ENCODE measurements at regions of chr9 and their contacts with region 1.

Region 1: GRCh38 chr9:71628247-71628646 is 140.1 kb downstream of the CEMIP2 start:
- DNase-seq: no peak
- H3K4me3 ChIP-seq: no peak overlapping the region
- H3K27ac ChIP-seq: no peak overlapping the region
- H3K4me1 ChIP-seq: no peaks in the 10 kb centered on the region; a peak in 1 of 7 replicates
- H3K27me3 ChIP-seq: no peaks in the 10 kb centered on the region; a peak in 1 of 7 replicates
- CTCF ChIP-seq: peak in 2 of 3 experiments; percentile 49 to 60; a peak in 3 of 4 replicates
- EP300 ChIP-seq: no peak
- POLR2A ChIP-seq: no peak
- RAD21 ChIP-seq: peak; percentile 65 to 72

Region 2: GRCh38 chr9:71549023-71549422 is 79.2 kb before region 1 on chr9:
- CTCF ChIA-PET with region 1: no interaction called
- POLR2A ChIA-PET with region 1: no interaction called
- DNase-seq: no peak
- H3K4me3 ChIP-seq: no peak overlapping the region
- H3K27ac ChIP-seq: no peak overlapping the region
- H3K4me1 ChIP-seq: peaks cover 0 to 6% (median 3%) of the 10 kb centered on the region in 4 experiments; a peak in 6 of 7 replicates
- H3K27me3 ChIP-seq: no peaks in the 10 kb centered on the region
- CTCF ChIP-seq: no peak
- EP300 ChIP-seq: no peak
- POLR2A ChIP-seq: no peak
- RAD21 ChIP-seq: no peak

Region 3: DNA sequence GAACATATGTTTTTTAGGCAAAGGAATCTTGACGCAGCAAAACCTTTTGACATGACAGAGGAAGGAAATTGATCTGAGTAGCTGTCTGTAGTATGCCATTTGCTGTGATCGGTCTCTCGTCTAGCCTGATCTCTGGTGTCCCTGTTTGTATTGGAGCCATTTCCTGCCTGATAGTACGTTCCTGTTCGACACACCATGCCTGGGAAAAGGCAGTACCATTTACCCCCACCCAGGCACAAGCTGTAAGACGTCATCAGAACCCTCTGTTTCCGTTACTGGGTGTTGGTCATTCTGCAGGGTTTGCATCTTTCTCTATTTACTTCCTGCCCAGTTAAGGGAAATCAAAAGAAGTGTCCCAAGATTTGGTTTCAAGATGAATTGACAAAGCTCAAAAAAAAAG is 10.4 kb after region 1 on chr9:
- CTCF ChIA-PET with region 1: interaction called, 22 read pairs
- POLR2A ChIA-PET with region 1: no interaction called
- DNase-seq: no peak
- H3K4me3 ChIP-seq: no peak overlapping the region
- H3K27ac ChIP-seq: no peak overlapping the region
- H3K4me1 ChIP-seq: no peaks in the 10 kb centered on the region
- H3K27me3 ChIP-seq: no peaks in the 10 kb centered on the region; a peak in 1 of 7 replicates
- CTCF ChIP-seq: no peak
- EP300 ChIP-seq: no peak
- POLR2A ChIP-seq: no peak
- RAD21 ChIP-seq: no peak

Region 4: DNA sequence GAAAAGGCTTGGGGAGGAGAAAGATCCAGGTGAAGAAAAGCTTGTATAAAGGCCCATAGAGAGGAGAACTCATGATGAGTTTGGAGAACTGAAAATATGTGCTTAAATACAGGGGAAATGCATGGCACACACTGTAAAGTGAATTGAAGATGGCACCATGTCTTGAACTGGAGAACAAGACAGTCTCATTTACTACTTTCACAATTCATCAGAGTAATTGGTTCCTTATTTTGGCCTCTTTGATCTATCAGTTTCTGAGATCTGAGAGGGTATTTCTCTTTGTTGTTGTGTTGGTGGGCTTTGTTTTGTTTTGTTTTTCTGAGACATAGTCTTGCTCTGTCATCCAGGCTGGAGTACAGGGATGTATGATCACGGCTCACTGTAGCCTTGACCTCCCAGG is 41.9 kb after region 1 on chr9:
- CTCF ChIA-PET with region 1: no interaction called
- POLR2A ChIA-PET with region 1: no interaction called
- DNase-seq: no peak
- H3K4me3 ChIP-seq: no peak overlapping the region
- H3K27ac ChIP-seq: no peak overlapping the region
- H3K4me1 ChIP-seq: peaks cover 0 to 2% (median 0%) of the 10 kb centered on the region in 4 experiments; a peak in 2 of 7 replicates
- H3K27me3 ChIP-seq: no peaks in the 10 kb centered on the region
- CTCF ChIP-seq: no peak
- EP300 ChIP-seq: no peak
- POLR2A ChIP-seq: no peak
- RAD21 ChIP-seq: no peak

Region 5: GRCh38 chr9:71683598-71684235 is 55.5 kb after region 1 on chr9:
- CTCF ChIA-PET with region 1: interaction called, 19 read pairs
- POLR2A ChIA-PET with region 1: no interaction called
- DNase-seq: peak; percentile 51 to 55
- H3K4me3 ChIP-seq: 0 out of 8 replicates have a peak overlapping the region, but pooled peaks of 1 of the 4 experiments have one; percentile 0
- H3K27ac ChIP-seq: no peak overlapping the region; the same call in 1 of the 2 replicates
- H3K4me1 ChIP-seq: peaks cover 0 to 8% (median 5%) of the 10 kb centered on the region in 4 experiments; a peak in 5 of 7 replicates
- H3K27me3 ChIP-seq: no peaks in the 10 kb centered on the region
- CTCF ChIP-seq: peak; percentile 25 to 68 (median 65); a peak in 3 of 4 replicates
- EP300 ChIP-seq: no peak
- POLR2A ChIP-seq: no peak
- RAD21 ChIP-seq: peak; percentile 67 to 73

Region 6: GRCh38 chr9:71690063-71690688 is 61.9 kb after region 1 on chr9:
- CTCF ChIA-PET with region 1: interaction called, 17 read pairs
- POLR2A ChIA-PET with region 1: no interaction called
- DNase-seq: no peak
- H3K4me3 ChIP-seq: no peak overlapping the region
- H3K27ac ChIP-seq: no peak overlapping the region
- H3K4me1 ChIP-seq: no peaks in the 10 kb centered on the region
- H3K27me3 ChIP-seq: no peaks in the 10 kb centered on the region
- CTCF ChIP-seq: no peak
- EP300 ChIP-seq: no peak
- POLR2A ChIP-seq: no peak
- RAD21 ChIP-seq: no peak

Measured in H1 (cell line).